Activated CD4-positive, alpha-beta memory T cell treated with anti-CD3 and anti-CD28 coated beads for 36 hours (primary cell): ENCODE measurements at regions of chr1 and their contacts with region 1.

Region 1: DNA sequence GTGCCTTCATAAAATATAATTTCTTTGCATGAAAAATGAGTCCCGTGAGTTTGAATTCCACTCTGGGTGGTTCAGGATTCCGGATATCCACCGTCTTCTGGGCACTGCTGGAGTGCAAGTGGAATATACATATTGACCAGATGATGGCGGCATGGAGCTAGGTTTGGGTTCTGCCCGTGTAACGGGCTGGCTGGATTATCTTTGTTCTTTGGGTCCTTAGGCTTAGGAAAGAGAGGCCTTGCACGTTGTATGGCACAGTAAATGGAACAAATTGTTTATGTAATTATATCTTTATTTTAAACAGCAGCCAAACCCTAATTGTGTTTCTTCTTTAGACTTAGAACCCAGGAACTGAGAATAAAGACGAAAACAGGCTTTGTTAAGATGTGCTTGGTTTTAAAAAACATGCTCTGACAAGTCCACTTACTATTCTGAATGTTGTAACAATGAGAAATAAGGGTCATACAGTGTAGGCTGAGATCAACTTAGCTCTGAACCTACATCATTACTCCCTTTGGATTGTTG is 13.5 kb upstream of the ACBD6 start:
- DNase-seq: peak; percentile 66
- H3K4me3 Mint-ChIP-seq: no peak overlapping the region
- H3K27ac Mint-ChIP-seq: no peak overlapping the region
- H3K4me1 Mint-ChIP-seq: no peaks in the 10 kb centered on the region
- H3K27me3 Mint-ChIP-seq: peaks cover 5% of the 10 kb centered on the region

Region 2: GRCh38 chr1:180527101-180527669 is 11.3 kb after region 1 on chr1:
- CTCF ChIA-PET with region 1: interaction called, 13 read pairs
- POLR2A ChIA-PET with region 1: no interaction called
- intact Hi-C with region 1: no loop called
- DNase-seq: no peak
- H3K4me3 Mint-ChIP-seq: no peak overlapping the region
- H3K27ac Mint-ChIP-seq: no peak overlapping the region
- H3K4me1 Mint-ChIP-seq: no peaks in the 10 kb centered on the region
- H3K27me3 Mint-ChIP-seq: no peaks in the 10 kb centered on the region